GM12878 (cell line): ENCODE measurements at regions of chrX and their contacts with region 1.

Region 1: DNA sequence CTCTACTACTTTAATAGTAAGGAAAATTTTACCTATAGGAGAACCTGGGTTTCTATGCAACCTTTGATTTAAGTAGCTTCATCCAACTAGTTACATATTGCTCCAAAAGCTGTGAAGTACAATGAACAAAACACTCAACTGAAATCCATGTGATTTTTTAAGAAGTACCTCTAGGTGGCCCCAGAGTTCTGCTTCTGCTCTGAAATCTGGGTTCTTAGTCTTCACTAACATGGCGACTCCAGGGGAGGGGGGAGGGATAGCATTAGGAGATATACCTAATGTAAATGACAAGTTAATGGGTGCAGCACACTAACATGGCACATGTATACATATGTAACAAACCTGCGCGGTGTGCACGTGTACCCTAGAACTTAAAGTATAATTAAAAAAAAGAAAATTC is 73.4 kb upstream of the MAGEB2 start:
- DNase-seq: no peak
- ATAC-seq: peak; percentile 92
- H3K4me3 ChIP-seq: no peak overlapping the region
- H3K27ac ChIP-seq: no peak overlapping the region
- H3K4me1 ChIP-seq: no peaks in the 10 kb centered on the region
- H3K27me3 ChIP-seq: no peaks in the 10 kb centered on the region
- CTCF ChIP-seq: peak; percentile 41 to 54 (median 43); a peak in 5 of 6 replicates
- EP300 ChIP-seq: no peak
- POLR2A ChIP-seq: no peak
- RAD21 ChIP-seq: peak; percentile 77

Region 2: GRCh38 chrX:30212172-30212571 is 70.2 kb after region 1 on chrX:
- CTCF ChIA-PET with region 1: no interaction called
- POLR2A ChIA-PET with region 1: no interaction called
- RAD21 ChIA-PET with region 1: no interaction called
- SMC1A ChIA-PET with region 1: no interaction called
- in situ Hi-C with region 1: no loop called
- intact Hi-C with region 1: no loop called
- DNase-seq: no peak
- ATAC-seq: no peak
- H3K4me3 ChIP-seq: no peak overlapping the region
- H3K27ac ChIP-seq: no peak overlapping the region
- H3K4me1 ChIP-seq: no peaks in the 10 kb centered on the region
- H3K27me3 ChIP-seq: no peaks in the 10 kb centered on the region
- CTCF ChIP-seq: no peak
- EP300 ChIP-seq: no peak
- POLR2A ChIP-seq: no peak
- RAD21 ChIP-seq: no peak

Region 3: DNA sequence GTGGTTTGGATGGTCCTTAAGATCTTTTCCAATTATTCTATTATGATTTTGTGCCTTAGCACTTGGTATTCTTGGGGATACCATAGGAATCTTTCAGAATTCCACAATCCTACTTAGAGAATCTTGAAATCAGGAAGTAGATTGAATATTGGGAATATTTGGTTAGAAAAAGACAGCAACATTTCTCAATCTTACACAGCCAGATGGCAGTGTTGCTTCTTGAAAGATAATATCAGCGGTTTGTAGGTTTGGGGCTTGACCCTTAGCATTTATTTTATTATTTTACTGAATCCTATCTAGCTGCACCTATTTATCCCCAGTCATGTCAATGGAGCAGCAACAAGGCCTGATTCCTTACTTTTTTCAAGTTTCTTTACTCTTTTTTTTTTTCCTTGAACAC is 133.5 kb after region 1 on chrX:
- CTCF ChIA-PET with region 1: interaction called, 5 read pairs
- POLR2A ChIA-PET with region 1: no interaction called
- RAD21 ChIA-PET with region 1: no interaction called
- SMC1A ChIA-PET with region 1: no interaction called
- in situ Hi-C with region 1: no loop called
- intact Hi-C with region 1: loop called (anchors 10 kb)
- DNase-seq: no peak
- ATAC-seq: no peak
- H3K4me3 ChIP-seq: no peak overlapping the region
- H3K27ac ChIP-seq: no peak overlapping the region
- H3K4me1 ChIP-seq: no peaks in the 10 kb centered on the region
- H3K27me3 ChIP-seq: peaks cover 0 to 2% of the 10 kb centered on the region in 2 experiments; a peak in 1 of 4 replicates
- CTCF ChIP-seq: peak in 1 of 3 experiments; percentile 39; a peak in 1 of 6 replicates
- EP300 ChIP-seq: no peak
- POLR2A ChIP-seq: no peak
- RAD21 ChIP-seq: peak; percentile 34; the same call in 1 of the 2 replicates

Region 4: DNA sequence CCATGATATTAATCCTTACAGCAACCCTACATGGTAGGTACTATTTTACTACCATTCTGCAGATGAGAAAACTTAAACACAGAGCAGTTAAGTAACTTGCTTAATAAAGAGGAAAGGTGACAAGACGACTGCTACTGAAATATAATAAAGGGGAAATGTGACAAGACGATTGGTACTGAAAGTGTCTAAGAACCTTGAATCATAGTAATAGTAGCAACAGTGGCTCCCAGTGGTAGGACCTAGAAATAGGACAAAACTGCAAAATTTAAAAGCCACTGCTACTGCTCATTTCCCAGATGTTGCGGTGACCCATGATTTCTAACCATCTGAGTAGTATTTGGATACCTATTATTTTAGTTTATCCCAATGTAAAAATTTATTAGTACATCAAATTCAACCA is 346.1 kb after region 1 on chrX:
- CTCF ChIA-PET with region 1: no interaction called
- POLR2A ChIA-PET with region 1: no interaction called
- RAD21 ChIA-PET with region 1: no interaction called
- SMC1A ChIA-PET with region 1: no interaction called
- in situ Hi-C with region 1: no loop called
- intact Hi-C with region 1: loop called (anchors 1 kb)
- DNase-seq: no peak
- ATAC-seq: peak; percentile 83
- H3K4me3 ChIP-seq: no peak overlapping the region
- H3K27ac ChIP-seq: no peak overlapping the region
- H3K4me1 ChIP-seq: no peaks in the 10 kb centered on the region; the same call in 1 of the 2 replicates
- H3K27me3 ChIP-seq: no peaks in the 10 kb centered on the region
- CTCF ChIP-seq: peak; percentile 29 to 44 (median 39); a peak in 4 of 6 replicates
- EP300 ChIP-seq: no peak
- POLR2A ChIP-seq: no peak
- RAD21 ChIP-seq: peak; percentile 52

Region 5: DNA sequence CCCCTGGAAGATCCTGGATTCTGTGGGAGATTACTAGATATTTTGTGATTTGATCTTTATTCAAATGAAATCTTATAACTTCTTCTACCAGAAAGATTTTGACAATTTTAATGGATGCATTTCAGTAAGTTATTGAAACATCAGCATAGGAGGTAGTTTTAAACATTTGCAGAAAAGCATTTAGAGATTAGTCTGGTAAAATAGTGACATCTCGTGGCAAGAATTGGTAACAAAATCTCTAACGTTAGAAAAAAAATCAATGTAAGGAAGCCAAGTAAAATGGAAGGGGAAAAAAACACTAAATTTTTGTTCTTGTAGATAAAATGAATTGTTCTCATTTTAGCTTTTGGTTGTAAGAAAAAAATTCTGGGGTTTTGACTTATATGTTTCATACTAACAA is 362.3 kb after region 1 on chrX:
- CTCF ChIA-PET with region 1: interaction called, 10 read pairs
- POLR2A ChIA-PET with region 1: no interaction called
- RAD21 ChIA-PET with region 1: interaction called, 4 read pairs
- SMC1A ChIA-PET with region 1: interaction called, 7 read pairs
- in situ Hi-C with region 1: loop called (anchors 5 kb)
- intact Hi-C with region 1: loop called (anchors 1 kb)
- DNase-seq: peak; percentile 5
- ATAC-seq: peak; percentile 27; the same call in 1 of the 3 replicates
- H3K4me3 ChIP-seq: no peak overlapping the region
- H3K27ac ChIP-seq: no peak overlapping the region
- H3K4me1 ChIP-seq: no peaks in the 10 kb centered on the region
- H3K27me3 ChIP-seq: no peaks in the 10 kb centered on the region
- CTCF ChIP-seq: peak; percentile 38 to 66 (median 49); a peak in 5 of 6 replicates
- EP300 ChIP-seq: no peak
- POLR2A ChIP-seq: no peak
- RAD21 ChIP-seq: peak; percentile 65

Region 6: GRCh38 chrX:30513284-30513683 is 371.3 kb after region 1 on chrX:
- CTCF ChIA-PET with region 1: interaction called, 11 read pairs
- POLR2A ChIA-PET with region 1: no interaction called
- RAD21 ChIA-PET with region 1: no interaction called
- SMC1A ChIA-PET with region 1: interaction called, 5 read pairs
- in situ Hi-C with region 1: loop called (anchors 5 kb)
- intact Hi-C with region 1: no loop called
- DNase-seq: no peak
- ATAC-seq: peak; percentile 84
- H3K4me3 ChIP-seq: no peak overlapping the region
- H3K27ac ChIP-seq: no peak overlapping the region
- H3K4me1 ChIP-seq: no peaks in the 10 kb centered on the region
- H3K27me3 ChIP-seq: no peaks in the 10 kb centered on the region
- CTCF ChIP-seq: peak; percentile 51 to 61 (median 57)
- EP300 ChIP-seq: no peak
- POLR2A ChIP-seq: no peak
- RAD21 ChIP-seq: peak; percentile 40